ENCODE measurements at regions of chr2 and their contacts with region 1.

Region 1: DNA sequence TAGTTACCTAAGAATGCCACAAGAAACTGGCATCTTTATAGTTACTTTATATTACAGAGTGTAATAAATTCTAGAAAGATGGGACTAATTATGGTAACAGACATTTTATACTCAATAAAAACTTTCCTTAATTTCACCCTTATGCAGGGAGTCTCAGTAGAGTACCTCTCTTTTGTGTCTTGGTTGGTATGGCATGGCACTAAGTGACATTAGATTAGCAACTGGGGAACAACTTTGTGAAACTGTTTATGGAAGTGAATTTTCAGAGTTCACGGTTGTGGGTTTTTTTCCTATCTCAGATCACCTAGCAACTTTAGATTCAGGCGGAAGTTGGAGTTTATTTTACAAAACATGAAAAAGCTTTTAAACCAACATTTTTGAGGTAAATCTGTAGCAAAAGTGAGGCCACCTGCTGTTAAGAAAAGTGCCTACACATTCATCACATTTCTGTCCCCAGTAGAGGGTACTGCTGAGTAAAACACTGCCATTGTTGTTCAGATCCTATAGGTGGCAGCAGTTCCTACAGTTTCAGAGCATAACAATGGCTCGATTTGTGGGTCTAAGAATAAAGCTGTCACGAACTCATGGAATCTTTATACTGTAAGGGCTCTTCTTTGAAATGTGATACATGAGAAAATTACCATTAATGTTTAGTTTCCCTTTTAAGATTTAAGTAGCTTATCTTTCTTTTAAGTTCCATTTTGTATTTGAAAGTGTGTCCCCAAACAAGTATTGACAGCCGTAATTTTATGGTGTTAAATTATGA is 117.6 kb downstream of the CAMKMT start:
- DNase-seq: peak; percentile 46
- ATAC-seq: peak; percentile 100
- H3K4me3 Mint-ChIP-seq: no peak overlapping the region
- H3K27ac Mint-ChIP-seq: no peak overlapping the region
- H3K4me1 Mint-ChIP-seq: peaks cover 8% of the 10 kb centered on the region
- H3K27me3 Mint-ChIP-seq: no peaks in the 10 kb centered on the region
- CTCF ChIP-seq: peak; percentile 100

Region 2: DNA sequence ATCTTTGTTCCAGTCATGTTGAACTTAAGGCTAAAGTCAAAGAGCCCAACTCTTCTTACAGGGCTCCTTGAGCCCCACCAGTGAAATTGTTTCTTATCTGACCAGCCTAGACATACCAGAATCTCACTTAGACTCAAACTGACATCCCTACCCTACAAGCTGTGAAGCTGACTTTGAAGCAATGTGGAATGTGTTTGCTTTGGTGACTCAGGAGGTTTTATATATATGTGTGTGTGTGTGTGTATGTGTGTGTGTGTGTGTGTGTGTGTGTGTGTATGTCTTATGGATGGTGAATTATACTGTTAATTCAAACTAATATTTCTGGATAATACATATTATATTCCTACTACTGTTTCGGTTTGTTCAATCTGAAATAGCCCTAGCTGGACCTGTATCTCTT is 50.3 kb before region 1 on chr2:
- CTCF ChIA-PET with region 1: interaction called, 10 read pairs
- POLR2A ChIA-PET with region 1: no interaction called
- intact Hi-C with region 1: no loop called
- DNase-seq: no peak
- ATAC-seq: no peak
- H3K4me3 Mint-ChIP-seq: no peak overlapping the region
- H3K27ac Mint-ChIP-seq: no peak overlapping the region
- H3K4me1 Mint-ChIP-seq: peaks cover 20% of the 10 kb centered on the region
- H3K27me3 Mint-ChIP-seq: no peaks in the 10 kb centered on the region
- CTCF ChIP-seq: no peak

Region 3: GRCh38 chr2:44490726-44491125 is 11.4 kb after region 1 on chr2:
- CTCF ChIA-PET with region 1: interaction called, 48 read pairs
- POLR2A ChIA-PET with region 1: no interaction called
- intact Hi-C with region 1: no loop called
- DNase-seq: no peak
- ATAC-seq: no peak
- H3K4me3 Mint-ChIP-seq: no peak overlapping the region
- H3K27ac Mint-ChIP-seq: no peak overlapping the region
- H3K4me1 Mint-ChIP-seq: no peaks in the 10 kb centered on the region
- H3K27me3 Mint-ChIP-seq: no peaks in the 10 kb centered on the region
- CTCF ChIP-seq: no peak

Region 4: GRCh38 chr2:44542520-44542919 is 63.2 kb after region 1 on chr2:
- CTCF ChIA-PET with region 1: interaction called, 14 read pairs
- POLR2A ChIA-PET with region 1: no interaction called
- intact Hi-C with region 1: no loop called
- DNase-seq: no peak
- ATAC-seq: no peak
- H3K4me3 Mint-ChIP-seq: no peak overlapping the region
- H3K27ac Mint-ChIP-seq: no peak overlapping the region
- H3K4me1 Mint-ChIP-seq: no peaks in the 10 kb centered on the region
- H3K27me3 Mint-ChIP-seq: no peaks in the 10 kb centered on the region
- CTCF ChIP-seq: no peak

Region 5: GRCh38 chr2:44715671-44716081 is 236.4 kb after region 1 on chr2:
- CTCF ChIA-PET with region 1: interaction called, 10 read pairs
- POLR2A ChIA-PET with region 1: no interaction called
- intact Hi-C with region 1: no loop called
- DNase-seq: no peak
- ATAC-seq: no peak
- H3K4me3 Mint-ChIP-seq: no peak overlapping the region
- H3K27ac Mint-ChIP-seq: no peak overlapping the region
- H3K4me1 Mint-ChIP-seq: peaks cover 3% of the 10 kb centered on the region
- H3K27me3 Mint-ChIP-seq: no peaks in the 10 kb centered on the region
- CTCF ChIP-seq: no peak

Region 6: DNA sequence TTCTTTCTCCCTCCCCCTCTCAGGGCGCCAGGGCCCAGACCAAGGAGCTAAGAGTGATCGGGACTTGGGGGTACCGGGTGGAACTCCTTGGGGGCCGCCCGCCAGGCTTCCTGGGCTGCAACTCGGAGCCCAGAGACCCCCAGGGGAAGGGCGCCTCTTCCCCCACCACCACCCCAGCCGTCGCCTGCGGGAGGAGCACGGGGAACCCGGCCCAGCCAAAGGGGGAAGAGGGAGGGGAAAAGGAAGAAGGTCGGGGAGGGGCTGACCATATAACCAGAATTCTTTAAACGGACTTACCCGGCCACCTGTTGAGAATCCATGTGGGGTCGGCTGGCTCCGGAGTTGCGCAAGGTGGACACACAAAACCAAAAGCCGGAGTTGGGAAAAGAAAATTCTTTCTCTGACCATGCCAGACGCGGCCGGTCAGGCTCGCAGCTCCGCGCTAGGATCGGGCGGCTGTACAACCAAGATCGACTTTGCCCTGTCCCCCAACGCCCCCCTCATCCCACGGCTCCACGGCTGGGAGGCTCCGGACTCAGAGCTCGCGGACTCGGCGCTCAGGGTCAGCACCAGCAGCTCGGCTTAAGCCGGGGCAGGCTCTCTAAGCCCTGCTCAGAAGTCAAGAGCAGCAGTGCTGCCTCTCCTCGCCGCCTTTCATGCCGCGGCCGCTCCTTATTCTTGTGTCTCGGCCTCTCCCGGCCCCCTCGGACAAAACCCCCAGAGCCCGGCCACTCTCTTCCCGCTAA is 455.9 kb after region 1 on chr2:
- CTCF ChIA-PET with region 1: interaction called, 10 read pairs
- POLR2A ChIA-PET with region 1: no interaction called
- intact Hi-C with region 1: no loop called
- DNase-seq: no peak
- ATAC-seq: no peak
- H3K4me3 Mint-ChIP-seq: no peak overlapping the region
- H3K27ac Mint-ChIP-seq: no peak overlapping the region
- H3K4me1 Mint-ChIP-seq: peaks cover 37% of the 10 kb centered on the region
- H3K27me3 Mint-ChIP-seq: peaks cover 82% of the 10 kb centered on the region
- CTCF ChIP-seq: no peak

Measured in activated CD8-positive, alpha-beta T cell treated with anti-CD3 and anti-CD28 coated beads for 36 hours (primary cell).